Activated CD8-positive, alpha-beta T cell treated with anti-CD3 and anti-CD28 coated beads for 36 hours (primary cell): ENCODE measurements at regions of chr22 and their contacts with region 1.

Region 1: DNA sequence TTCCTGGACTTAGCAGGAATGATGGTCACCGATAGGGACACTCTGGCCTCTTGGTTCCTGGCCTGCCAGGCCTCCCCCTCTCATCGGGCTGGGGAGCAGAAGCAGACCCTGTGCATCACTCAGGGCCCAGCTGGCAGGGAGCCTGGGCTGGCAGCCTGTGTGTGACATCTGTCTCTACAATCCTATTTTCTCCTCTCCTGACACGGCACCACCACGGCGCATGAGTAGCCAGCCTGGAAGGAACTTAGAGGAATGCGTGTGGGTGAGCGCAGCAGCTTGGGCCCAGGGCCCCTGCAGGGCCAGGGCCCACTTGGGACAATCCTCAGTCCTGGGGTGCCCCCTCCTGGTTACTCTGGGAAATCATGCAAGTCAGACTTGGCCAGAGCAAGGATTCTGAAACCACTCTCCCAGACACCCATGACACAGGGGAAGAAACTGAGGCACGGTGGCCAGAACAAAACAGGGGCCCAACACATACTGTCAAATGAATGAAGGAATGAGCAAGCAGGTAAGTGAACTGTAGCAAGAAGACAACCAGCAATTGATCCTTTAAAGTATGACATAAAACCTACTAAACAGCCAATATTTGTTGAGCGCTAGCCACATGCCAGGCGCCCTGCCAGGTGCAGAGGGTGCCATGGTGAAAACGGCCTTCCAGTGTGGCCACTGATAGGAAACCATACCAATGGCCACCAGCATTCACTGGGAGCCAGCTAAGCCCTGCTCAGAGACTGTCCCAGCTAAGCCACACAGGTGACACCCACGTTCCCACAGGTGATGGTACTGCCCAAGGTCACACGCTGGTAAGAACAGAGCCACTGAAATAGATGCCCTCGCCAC is 13.3 kb downstream of the RSPH14 start:
- DNase-seq: peak; percentile 80
- ATAC-seq: peak; percentile 93
- H3K4me3 Mint-ChIP-seq: no peak overlapping the region
- H3K27ac Mint-ChIP-seq: no peak overlapping the region
- H3K4me1 Mint-ChIP-seq: no peaks in the 10 kb centered on the region
- H3K27me3 Mint-ChIP-seq: no peaks in the 10 kb centered on the region
- CTCF ChIP-seq: peak; percentile 76

Region 2: GRCh38 chr22:22968366-22968765 is 160.1 kb before region 1 on chr22:
- CTCF ChIA-PET with region 1: interaction called, 13 read pairs
- POLR2A ChIA-PET with region 1: no interaction called
- intact Hi-C with region 1: no loop called
- DNase-seq: no peak
- ATAC-seq: no peak
- H3K4me3 Mint-ChIP-seq: no peak overlapping the region
- H3K27ac Mint-ChIP-seq: no peak overlapping the region
- H3K4me1 Mint-ChIP-seq: no peaks in the 10 kb centered on the region
- H3K27me3 Mint-ChIP-seq: peaks cover 54% of the 10 kb centered on the region
- CTCF ChIP-seq: no peak

Region 3: GRCh38 chr22:23156286-23156685 is 27.8 kb after region 1 on chr22:
- CTCF ChIA-PET with region 1: no interaction called
- POLR2A ChIA-PET with region 1: no interaction called
- intact Hi-C with region 1: no loop called
- DNase-seq: no peak
- ATAC-seq: no peak
- H3K4me3 Mint-ChIP-seq: no peak overlapping the region
- H3K27ac Mint-ChIP-seq: no peak overlapping the region
- H3K4me1 Mint-ChIP-seq: peaks cover 8% of the 10 kb centered on the region
- H3K27me3 Mint-ChIP-seq: no peaks in the 10 kb centered on the region
- CTCF ChIP-seq: no peak